Panc1 (cell line): ENCODE measurements at regions of chr11 and their contacts with region 1.

Region 1: GRCh38 chr11:12168114-12168513 is 57.7 kb downstream of the MICAL2 start:
- DNase-seq: no peak
- ATAC-seq: no peak
- H3K4me3 ChIP-seq: no peak overlapping the region
- H3K27ac ChIP-seq: peak overlapping the region; percentile 89
- H3K4me1 ChIP-seq: peaks cover 74% of the 10 kb centered on the region
- H3K27me3 ChIP-seq: no peaks in the 10 kb centered on the region
- CTCF ChIP-seq: no peak

Region 2: GRCh38 chr11:12179531-12179930 is 11.4 kb after region 1 on chr11:
- CTCF ChIA-PET with region 1: no interaction called
- POLR2A ChIA-PET with region 1: interaction called, 15 read pairs
- in situ Hi-C with region 1: no loop called
- intact Hi-C with region 1: no loop called
- DNase-seq: no peak
- ATAC-seq: peak; percentile 13; the same call in 1 of the 2 replicates
- H3K4me3 ChIP-seq: no peak overlapping the region
- H3K27ac ChIP-seq: peak overlapping the region; percentile 80
- H3K4me1 ChIP-seq: peaks cover 67% of the 10 kb centered on the region
- H3K27me3 ChIP-seq: no peaks in the 10 kb centered on the region
- CTCF ChIP-seq: no peak